ENCODE measurements at regions of chr6 and their contacts with region 1.

Region 1: DNA sequence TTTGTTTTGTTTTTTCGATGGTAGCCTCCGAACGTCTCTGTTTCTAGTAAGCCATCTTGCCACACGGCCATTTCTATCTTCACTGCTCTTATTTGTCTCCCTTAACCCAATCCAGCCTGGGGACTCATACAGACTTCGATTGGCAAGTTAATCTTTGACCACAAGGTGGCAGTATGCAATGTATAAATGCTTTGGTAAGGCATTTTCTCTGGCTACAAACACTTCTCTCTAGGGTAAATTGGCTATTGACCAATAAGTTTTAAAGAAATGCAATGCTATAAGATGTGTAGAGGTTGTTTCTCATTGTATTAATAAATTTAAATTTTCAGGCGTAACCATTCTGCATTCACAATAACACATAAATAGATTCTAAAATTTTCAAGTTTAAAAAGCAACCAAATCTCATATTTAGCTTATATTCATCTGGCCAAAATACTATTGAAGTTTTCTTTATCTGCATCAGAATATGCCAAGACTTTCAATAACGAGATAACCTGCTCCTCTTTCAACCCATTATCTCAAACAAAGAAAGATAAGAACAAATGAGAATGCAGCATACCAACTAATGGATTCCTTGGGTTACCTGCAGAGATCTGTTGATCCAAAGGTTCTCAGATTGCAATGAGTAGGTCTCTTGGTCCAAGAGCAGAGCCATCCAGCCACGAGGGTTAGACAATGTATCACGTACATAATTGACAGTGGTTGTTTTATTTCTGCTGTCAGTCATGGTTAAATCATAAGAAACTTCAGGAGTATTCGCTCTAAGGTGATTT is 231.9 kb downstream of the PKHD1 start:
- DNase-seq: no peak
- ATAC-seq: no peak
- H3K4me3 ChIP-seq: no peak overlapping the region
- H3K27ac ChIP-seq: no peak overlapping the region
- H3K4me1 ChIP-seq: no peaks in the 10 kb centered on the region
- H3K27me3 ChIP-seq: peaks cover 0 to 22% (median 10%) of the 10 kb centered on the region in 7 donors
- CTCF ChIP-seq: peak; percentile 20 to 68 (median 59)

Region 2: DNA sequence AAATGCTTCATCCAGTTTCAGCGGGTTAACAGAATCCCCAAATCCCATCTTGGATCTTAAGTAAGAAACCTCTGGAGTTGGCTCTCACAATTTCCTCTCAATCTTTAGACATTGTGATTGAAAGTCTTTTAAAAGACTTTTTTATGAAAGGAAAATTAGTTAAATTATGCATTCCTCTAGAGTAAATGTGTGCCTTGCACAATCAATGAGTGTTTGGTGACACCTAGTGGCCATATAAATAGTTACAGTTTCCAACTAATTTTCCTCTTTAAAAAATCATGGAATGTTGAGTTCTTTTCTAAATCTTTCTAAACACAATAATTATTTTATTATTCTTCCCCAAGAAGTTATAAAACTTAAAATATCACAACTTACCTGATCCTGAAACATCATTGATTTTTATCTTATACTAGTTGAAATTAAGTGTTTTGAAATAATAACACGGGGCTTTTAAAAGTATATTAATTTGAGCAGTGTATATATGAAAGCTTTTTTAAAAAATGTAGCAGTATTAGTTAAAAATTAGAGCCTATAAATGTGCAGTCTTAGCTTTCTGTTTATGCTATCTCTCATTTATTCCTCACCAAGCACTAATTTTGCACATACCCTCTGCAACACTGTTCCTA is 165.6 kb after region 1 on chr6:
- intact Hi-C with region 1: loop called in 6 of 10 experiments (anchors 10 kb)
- DNase-seq: no peak
- ATAC-seq: no peak
- H3K4me3 ChIP-seq: no peak overlapping the region
- H3K27ac ChIP-seq: no peak overlapping the region
- H3K4me1 ChIP-seq: no peaks in the 10 kb centered on the region
- H3K27me3 ChIP-seq: peaks cover 0 to 29% (median 5%) of the 10 kb centered on the region in 7 donors
- CTCF ChIP-seq: peak; percentile 59 to 85 (median 79)

Measured in heart right ventricle (tissue), 16 donors.